HCT116 (cell line): ENCODE measurements at regions of chr4 and their contacts with region 1.

Region 1: GRCh38 chr4:151325111-151325948 is at the start of gene SH3D19:
- DNase-seq: peak; percentile 68
- ATAC-seq: peak; percentile 86
- H3K4me3 ChIP-seq: peak within 1 kb of the TSS; percentile 57 to 69
- H3K27ac ChIP-seq: peak within 1 kb of the TSS; percentile 96
- H3K4me1 ChIP-seq: peaks cover 38 to 66% of the 10 kb centered on the region in 2 experiments
- H3K27me3 ChIP-seq: no peaks in the 10 kb centered on the region
- CTCF ChIP-seq: no peak
- POLR2A ChIP-seq: no peak
- RAD21 ChIP-seq: no peak
- total RNA-seq, gene SH3D19: 37.5 TPM

Region 2: GRCh38 chr4:151408630-151409469 is 83.5 kb after region 1 on chr4 and contains the start of gene FHIP1A:
- CTCF ChIA-PET with region 1: no interaction called
- POLR2A ChIA-PET with region 1: interaction called, 3 read pairs
- RAD21 ChIA-PET with region 1: no interaction called
- intact Hi-C with region 1: loop called (anchors 5 kb)
- DNase-seq: peak; percentile 93
- ATAC-seq: peak; percentile 93
- H3K4me3 ChIP-seq: peak within 1 kb of the TSS; percentile 70 to 80
- H3K27ac ChIP-seq: peak within 1 kb of the TSS; percentile 78
- H3K4me1 ChIP-seq: peaks cover 11 to 26% of the 10 kb centered on the region in 2 experiments
- H3K27me3 ChIP-seq: no peaks in the 10 kb centered on the region
- CTCF ChIP-seq: 0 out of 6 replicates have a peak, but pooled peaks of 1 of the 3 experiments have one; percentile 1
- POLR2A ChIP-seq: peak; percentile 76
- RAD21 ChIP-seq: 0 out of 2 replicates have a peak, but pooled peaks have one; percentile 9
- total RNA-seq, gene FHIP1A: 14.8 TPM